OCI-LY7 (cell line): ENCODE measurements at regions of chr22 and their contacts with region 1.

Region 1: GRCh38 chr22:36194971-36195370 is 6.6 kb downstream of the APOL4 start:
- DNase-seq: peak; percentile 58
- H3K4me3 ChIP-seq: no peak overlapping the region
- H3K27ac ChIP-seq: no peak overlapping the region
- H3K4me1 ChIP-seq: peaks cover 12% of the 10 kb centered on the region
- CTCF ChIP-seq: peak; percentile 85

Region 2: GRCh38 chr22:36234919-36235318 is 39.9 kb after region 1 on chr22:
- CTCF ChIA-PET with region 1: no interaction called
- POLR2A ChIA-PET with region 1: no interaction called
- intact Hi-C with region 1: no loop called
- DNase-seq: no peak
- H3K4me3 ChIP-seq: no peak overlapping the region
- H3K27ac ChIP-seq: no peak overlapping the region
- H3K4me1 ChIP-seq: peaks cover 19% of the 10 kb centered on the region
- CTCF ChIP-seq: no peak

Region 3: GRCh38 chr22:36277482-36278291 is 82.7 kb after region 1 on chr22:
- CTCF ChIA-PET with region 1: no interaction called
- POLR2A ChIA-PET with region 1: no interaction called
- intact Hi-C with region 1: loop called (anchors 2 kb)
- DNase-seq: peak; percentile 72
- H3K4me3 ChIP-seq: no peak overlapping the region
- H3K27ac ChIP-seq: no peak overlapping the region
- H3K4me1 ChIP-seq: peaks cover 9% of the 10 kb centered on the region
- CTCF ChIP-seq: peak; percentile 84